Spleen (tissue), 13 donors: ENCODE measurements at regions of chr9 and their contacts with region 1.

Region 1: DNA sequence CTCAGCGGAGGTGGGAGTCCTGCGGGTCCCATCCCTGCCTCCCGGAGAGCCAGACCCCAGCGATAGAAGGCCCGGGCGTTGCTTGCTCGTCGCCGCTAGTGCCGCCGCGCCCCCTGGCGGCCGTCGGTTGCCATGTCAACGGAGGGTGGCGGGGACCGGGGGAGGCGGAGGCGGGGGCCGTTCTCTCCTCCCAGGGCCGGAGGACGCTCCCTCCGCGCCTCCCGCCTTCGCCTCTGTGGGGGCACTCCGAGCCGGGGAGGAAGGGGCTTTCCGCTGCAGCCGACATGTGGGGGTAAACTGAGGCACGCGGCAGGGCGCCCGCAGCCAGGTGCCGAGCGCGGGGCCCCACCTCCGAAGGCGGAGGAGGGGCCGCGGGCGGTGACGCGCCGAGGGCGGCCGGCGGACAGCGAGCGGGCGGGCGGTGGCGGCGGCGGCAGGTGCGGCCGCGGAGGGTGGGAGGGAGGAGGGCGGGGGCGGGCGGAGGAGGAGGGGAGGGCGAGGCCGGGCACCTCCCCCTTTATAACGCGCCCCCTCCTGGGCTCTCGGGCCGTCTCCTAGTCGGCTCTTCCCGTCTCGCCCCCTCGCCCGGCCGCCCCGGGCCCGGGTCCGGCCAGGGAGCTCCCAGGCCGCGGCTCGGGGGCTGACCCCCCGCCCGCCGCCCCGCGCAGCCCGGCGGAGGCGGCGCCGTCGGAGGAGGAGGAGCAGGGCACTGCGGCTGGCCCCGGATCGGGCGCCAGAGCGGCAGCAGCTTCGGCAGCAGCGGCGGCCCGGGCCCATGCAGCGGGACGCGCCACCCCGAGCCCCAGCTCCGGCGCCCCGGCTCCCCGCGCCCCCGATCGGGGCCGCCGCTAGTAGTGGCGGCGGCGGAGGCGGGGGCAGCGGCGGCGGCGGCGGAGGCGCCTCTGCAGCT is 556 bp upstream of the CDK9 start:
- DNase-seq: peak; percentile 99
- H3K4me3 ChIP-seq: peak overlapping the region; percentile 96 to 100 (median 100)
- H3K27ac ChIP-seq: peak overlapping the region; percentile 89 to 99 (median 96)
- H3K4me1 ChIP-seq: peaks cover 48 to 89% (median 82%) of the 10 kb centered on the region in 6 donors
- H3K27me3 ChIP-seq: no peaks in the 10 kb centered on the region
- CTCF ChIP-seq: peak; percentile 94 to 99 (median 96)
- POLR2A ChIP-seq: no peak

Region 2: DNA sequence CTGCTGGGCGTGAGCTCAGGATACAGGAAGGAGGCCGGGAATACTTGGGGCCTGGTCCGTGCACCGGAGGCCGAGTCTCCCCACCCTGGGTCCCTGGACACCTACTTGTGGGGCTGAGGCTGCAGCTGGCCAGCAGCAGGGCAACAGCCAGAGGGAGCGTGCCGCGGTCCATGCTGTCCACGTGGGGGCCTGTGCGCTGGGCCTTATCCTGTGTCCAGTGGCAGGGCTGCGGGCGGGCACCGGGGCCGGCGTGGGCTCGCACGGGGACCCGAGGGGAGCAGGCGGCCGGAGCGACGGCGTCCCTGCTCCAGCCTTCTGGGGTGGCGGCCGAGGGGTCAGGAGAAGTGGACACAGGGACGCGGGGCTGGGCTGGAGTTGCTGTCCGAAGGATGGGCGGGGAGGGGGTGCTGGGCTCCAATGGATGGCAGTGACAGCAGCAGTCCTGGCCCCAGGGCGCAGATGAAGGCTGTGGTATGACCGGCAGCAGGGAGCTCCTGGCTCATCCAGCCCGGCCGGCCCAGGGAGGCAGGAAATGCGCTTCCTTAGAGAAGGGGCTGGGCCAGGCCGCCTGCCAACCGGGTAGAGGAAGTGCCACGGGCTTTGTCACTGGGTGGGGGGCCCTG is 69.0 kb after region 1 on chr9 and contains the start of gene ENG:
- intact Hi-C with region 1: no loop called
- DNase-seq: peak; percentile 89
- H3K4me3 ChIP-seq: peak within 1 kb of the TSS; percentile 55 to 89 (median 81)
- H3K27ac ChIP-seq: peak within 1 kb of the TSS; percentile 58 to 91 (median 86)
- H3K4me1 ChIP-seq: peaks cover 44 to 100% (median 85%) of the 10 kb centered on the region in 6 donors
- H3K27me3 ChIP-seq: no peaks in the 10 kb centered on the region
- CTCF ChIP-seq: peak in 2 of 11 experiments; percentile 5 to 15
- POLR2A ChIP-seq: peak in 1 of 3 donors; percentile 46
- total RNA-seq, gene ENG: 150 to 334 (median 247) TPM

Region 3: GRCh38 chr9:127921557-127922120 is 136.4 kb after region 1 on chr9:
- intact Hi-C with region 1: loop called (anchors 5 kb)
- DNase-seq: peak; percentile 94
- H3K4me3 ChIP-seq: peak overlapping the region in 3 of 8 donors; percentile 9 to 54 (median 26)
- H3K27ac ChIP-seq: no peak overlapping the region
- H3K4me1 ChIP-seq: peaks cover 40 to 65% (median 49%) of the 10 kb centered on the region in 6 donors
- H3K27me3 ChIP-seq: peaks cover 0 to 36% (median 5%) of the 10 kb centered on the region in 7 donors
- CTCF ChIP-seq: peak; percentile 96 to 100 (median 99)
- POLR2A ChIP-seq: no peak